A549 (cell line): ENCODE measurements at regions of chr2 and their contacts with region 1.

Region 1: GRCh38 chr2:100610381-100610831 is 47.6 kb downstream of the PDCL3 start:
- DNase-seq: peak; percentile 70 to 81
- ATAC-seq: peak; percentile 87 to 94
- H3K4me3 ChIP-seq: no peak overlapping the region
- H3K27ac ChIP-seq: no peak overlapping the region
- H3K4me1 ChIP-seq: peaks cover 3% of the 10 kb centered on the region; the same call in 1 of the 3 replicates
- CTCF ChIP-seq: peak; percentile 77
- EP300 ChIP-seq: no peak
- POLR2A ChIP-seq: no peak
- RAD21 ChIP-seq: peak; percentile 92 to 96

Region 2: GRCh38 chr2:100596465-100596864 is 13.9 kb before region 1 on chr2:
- CTCF ChIA-PET with region 1: interaction called, 34 read pairs
- POLR2A ChIA-PET with region 1: no interaction called
- DNase-seq: no peak
- ATAC-seq: no peak
- H3K4me3 ChIP-seq: no peak overlapping the region
- H3K27ac ChIP-seq: no peak overlapping the region
- H3K4me1 ChIP-seq: no peaks in the 10 kb centered on the region
- CTCF ChIP-seq: no peak
- EP300 ChIP-seq: no peak
- POLR2A ChIP-seq: no peak
- RAD21 ChIP-seq: no peak

Region 3: DNA sequence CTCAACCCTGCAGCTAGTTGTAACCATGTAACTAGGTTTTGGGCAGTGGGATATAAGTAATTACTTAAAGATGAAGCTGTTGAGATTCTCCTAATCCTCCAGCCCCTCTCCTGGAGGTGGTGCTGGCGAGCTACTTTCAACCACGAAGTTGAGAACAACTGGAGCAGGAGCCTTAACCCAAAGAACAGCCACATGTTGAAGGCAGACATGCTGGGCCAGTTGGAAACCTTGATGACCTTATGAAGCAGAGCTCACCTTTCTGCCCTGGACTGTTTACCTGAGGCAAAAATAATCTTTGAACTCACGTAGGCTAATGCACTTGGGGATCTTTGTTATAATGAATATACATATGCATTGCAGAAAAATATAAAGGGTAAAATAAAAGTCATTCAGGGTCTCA is 119.9 kb after region 1 on chr2:
- CTCF ChIA-PET with region 1: interaction called, 13 read pairs
- POLR2A ChIA-PET with region 1: no interaction called
- DNase-seq: peak; percentile 38 to 82
- ATAC-seq: peak; percentile 51 to 87; a peak in 3 of 6 replicates
- H3K4me3 ChIP-seq: no peak overlapping the region
- H3K27ac ChIP-seq: peak overlapping the region; percentile 23 to 85; a peak in 4 of 6 replicates
- H3K4me1 ChIP-seq: peaks cover 34% of the 10 kb centered on the region
- CTCF ChIP-seq: peak; percentile 69
- EP300 ChIP-seq: no peak
- POLR2A ChIP-seq: no peak
- RAD21 ChIP-seq: peak; percentile 90 to 95

Region 4: DNA sequence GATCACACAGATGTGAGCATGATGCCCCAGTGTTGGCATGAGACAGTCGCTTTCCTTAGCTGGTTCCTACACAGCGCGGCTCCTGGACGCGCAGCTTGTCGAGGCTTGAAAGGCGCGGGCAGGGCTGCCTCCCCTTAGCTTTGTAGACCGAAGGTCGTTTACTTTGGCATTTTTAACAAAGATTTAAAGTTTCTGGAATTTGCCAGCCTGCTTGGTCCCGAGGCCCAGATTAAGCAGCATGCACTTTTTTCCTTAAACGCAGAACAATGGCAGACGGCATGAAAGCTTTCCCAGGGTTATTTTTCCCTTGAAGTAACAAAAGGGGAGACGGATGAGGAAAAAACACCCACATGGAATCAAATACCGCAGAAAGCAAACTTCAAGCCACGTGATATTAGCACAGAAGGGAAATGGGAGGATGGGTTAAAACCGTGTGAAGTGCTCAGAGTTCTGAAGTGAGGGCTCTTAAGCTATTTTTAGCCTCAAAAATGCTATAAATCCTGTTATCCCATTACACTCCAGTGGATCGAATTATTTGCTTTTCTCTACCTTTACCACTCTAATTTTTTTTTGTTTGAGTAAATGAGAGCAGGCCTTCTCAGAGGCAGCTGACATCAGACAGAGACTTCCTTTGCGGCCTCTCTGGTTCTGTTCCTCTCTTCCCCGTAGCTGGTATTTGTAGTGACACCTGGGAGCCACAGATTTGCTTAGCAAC is 265.3 kb after region 1 on chr2:
- CTCF ChIA-PET with region 1: interaction called, 15 read pairs
- POLR2A ChIA-PET with region 1: interaction called, 3 read pairs
- DNase-seq: no peak
- ATAC-seq: no peak
- H3K4me3 ChIP-seq: no peak overlapping the region
- H3K27ac ChIP-seq: 0 out of 6 replicates have a peak overlapping the region, but pooled peaks of 1 of the 2 experiments have one; percentile 17
- H3K4me1 ChIP-seq: peaks cover 39% of the 10 kb centered on the region
- CTCF ChIP-seq: no peak
- EP300 ChIP-seq: no peak
- POLR2A ChIP-seq: no peak
- RAD21 ChIP-seq: no peak

Region 5: GRCh38 chr2:100967716-100968115 is 357.3 kb after region 1 on chr2:
- CTCF ChIA-PET with region 1: interaction called, 10 read pairs
- POLR2A ChIA-PET with region 1: no interaction called
- DNase-seq: no peak
- ATAC-seq: no peak
- H3K4me3 ChIP-seq: no peak overlapping the region
- H3K27ac ChIP-seq: no peak overlapping the region
- H3K4me1 ChIP-seq: no peaks in the 10 kb centered on the region
- CTCF ChIP-seq: no peak
- EP300 ChIP-seq: no peak
- POLR2A ChIP-seq: no peak
- RAD21 ChIP-seq: no peak

Region 6: GRCh38 chr2:100984892-100985379 is 374.5 kb after region 1 on chr2:
- CTCF ChIA-PET with region 1: interaction called, 133 read pairs
- POLR2A ChIA-PET with region 1: no interaction called
- DNase-seq: peak; percentile 57 to 82
- ATAC-seq: peak; percentile 57 to 86; a peak in 4 of 6 replicates
- H3K4me3 ChIP-seq: no peak overlapping the region
- H3K27ac ChIP-seq: peak overlapping the region; percentile 57 to 61; a peak in 4 of 6 replicates
- H3K4me1 ChIP-seq: peaks cover 13% of the 10 kb centered on the region
- CTCF ChIP-seq: peak; percentile 94
- EP300 ChIP-seq: no peak
- POLR2A ChIP-seq: no peak
- RAD21 ChIP-seq: peak; percentile 96 to 97

Region 7: GRCh38 chr2:101151141-101151858 is 540.9 kb after region 1 on chr2 and contains the start of gene TBC1D8:
- CTCF ChIA-PET with region 1: interaction called, 12 read pairs
- POLR2A ChIA-PET with region 1: no interaction called
- DNase-seq: peak; percentile 80 to 82
- ATAC-seq: peak; percentile 81 to 83
- H3K4me3 ChIP-seq: peak within 1 kb of the TSS; percentile 85
- H3K27ac ChIP-seq: peak within 1 kb of the TSS; percentile 92 to 98
- H3K4me1 ChIP-seq: peaks cover 42% of the 10 kb centered on the region
- CTCF ChIP-seq: no peak
- EP300 ChIP-seq: no peak
- POLR2A ChIP-seq: peak; percentile 81
- RAD21 ChIP-seq: peak in 1 of 2 experiments; percentile 18; a peak in 2 of 5 replicates
- polyA plus RNA-seq, gene TBC1D8: 107 and 119 TPM in 2 replicates